ENCODE measurements at regions of chr2 and their contacts with region 1.

Region 1: GRCh38 chr2:31318361-31319336 is 84.7 kb downstream of the EHD3 start:
- DNase-seq: peak; percentile 44
- H3K4me3 Mint-ChIP-seq: peak overlapping the region; percentile 43
- H3K27ac Mint-ChIP-seq: peak overlapping the region; percentile 54
- H3K4me1 Mint-ChIP-seq: peaks cover 58% of the 10 kb centered on the region
- H3K27me3 Mint-ChIP-seq: peaks cover 4% of the 10 kb centered on the region

Region 2: DNA sequence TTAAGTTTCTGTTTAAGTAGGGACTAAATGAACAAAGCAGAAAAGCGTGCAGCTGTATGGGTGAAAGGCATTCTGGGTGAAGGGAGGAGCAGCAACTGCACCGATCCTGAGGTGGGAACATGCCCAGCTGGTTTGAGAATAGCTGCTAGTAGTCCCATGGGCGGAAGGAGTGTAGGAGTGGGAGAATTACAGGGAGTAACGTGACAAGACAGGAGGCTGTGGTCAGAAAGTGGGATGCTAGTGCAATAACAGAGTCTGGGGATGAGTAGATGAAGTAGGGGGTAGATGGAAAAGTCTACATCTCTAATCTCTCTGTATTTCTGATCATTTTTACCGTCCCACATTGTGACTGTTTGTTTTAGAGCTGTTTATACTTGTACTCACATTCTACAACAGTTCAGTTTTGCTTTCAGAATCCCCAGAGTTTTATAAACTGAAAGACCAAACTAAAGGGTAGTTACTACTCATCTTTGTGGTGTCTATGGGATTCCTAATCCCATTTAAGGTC is 752.7 kb before region 1 on chr2:
- intact Hi-C with region 1: loop called (anchors 5 kb)
- DNase-seq: no peak
- H3K4me3 Mint-ChIP-seq: no peak overlapping the region
- H3K27ac Mint-ChIP-seq: peak overlapping the region; percentile 88
- H3K4me1 Mint-ChIP-seq: peaks cover 15% of the 10 kb centered on the region
- H3K27me3 Mint-ChIP-seq: no peaks in the 10 kb centered on the region